GM10248 (cell line): ENCODE measurements at regions of chr22 and their contacts with region 1.

Region 1: GRCh38 chr22:22508274-22509176 is at the start of gene ZNF280B:
- DNase-seq: peak; percentile 90
- CTCF ChIP-seq: peak; percentile 86

Region 2: DNA sequence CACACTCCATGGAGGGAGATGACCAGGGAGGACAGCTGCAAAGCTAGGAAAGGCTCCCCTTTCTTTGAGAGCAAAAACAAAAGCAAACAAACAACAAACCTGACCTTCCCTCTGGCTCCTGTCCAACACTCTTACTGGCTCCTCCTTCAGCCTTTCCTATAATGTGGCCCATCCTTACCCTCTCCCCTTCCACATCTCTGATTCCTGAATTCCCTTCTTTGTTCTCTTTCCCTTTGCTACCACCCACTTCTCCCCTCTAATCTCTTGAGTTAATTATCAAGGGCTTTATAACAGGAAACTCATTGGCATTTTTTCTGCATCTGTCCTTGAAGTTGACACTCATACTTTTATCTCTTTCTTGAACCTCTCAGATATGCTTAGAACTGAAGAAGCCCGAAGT is 56.3 kb before region 1 on chr22:
- CTCF ChIA-PET with region 1: no interaction called
- POLR2A ChIA-PET with region 1: no interaction called
- DNase-seq: no peak
- CTCF ChIP-seq: no peak

Region 3: GRCh38 chr22:22520020-22520656 is 11.6 kb after region 1 on chr22 and contains the start of gene ZNF280A:
- CTCF ChIA-PET with region 1: interaction called, 24 read pairs
- POLR2A ChIA-PET with region 1: no interaction called
- DNase-seq: no peak
- CTCF ChIP-seq: no peak